Mammary epithelial cell (primary cell): ENCODE measurements at regions of chr7 and their contacts with region 1.

Region 1: DNA sequence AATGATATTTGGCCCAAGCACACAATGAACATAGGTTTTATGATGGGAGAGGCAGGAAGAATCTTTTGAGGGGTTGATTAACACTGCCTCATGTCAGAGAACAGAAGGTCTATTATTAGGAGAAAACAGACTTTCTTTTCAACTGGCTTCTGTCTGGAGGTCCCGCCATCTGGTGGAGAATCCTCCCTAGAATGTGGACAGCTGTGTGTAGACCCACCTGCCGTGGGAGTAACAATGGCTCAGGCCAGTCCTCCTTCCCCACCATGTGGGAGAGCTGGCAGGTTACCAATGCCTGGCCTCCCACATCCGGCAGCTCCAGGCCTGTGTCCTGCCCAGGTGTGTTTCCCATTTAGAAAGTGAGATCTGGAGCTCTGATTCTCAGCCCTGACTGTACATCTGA is 70.4 kb upstream of the AOAH start:
- DNase-seq: peak; percentile 96
- H3K4me3 ChIP-seq: no peak overlapping the region
- H3K27ac ChIP-seq: peak overlapping the region; percentile 92
- H3K4me1 ChIP-seq: peaks cover 27% of the 10 kb centered on the region
- H3K27me3 ChIP-seq: no peaks in the 10 kb centered on the region
- CTCF ChIP-seq: peak; percentile 25 to 30

Region 2: GRCh38 chr7:36583318-36583717 is 211.4 kb before region 1 on chr7:
- CTCF ChIA-PET with region 1: no interaction called
- dilution Hi-C with region 1: no loop called
- in situ Hi-C with region 1: no loop called
- intact Hi-C with region 1: no loop called
- DNase-seq: peak; percentile 62
- H3K4me3 ChIP-seq: no peak overlapping the region
- H3K27ac ChIP-seq: no peak overlapping the region
- H3K4me1 ChIP-seq: peaks cover 10% of the 10 kb centered on the region
- H3K27me3 ChIP-seq: no peaks in the 10 kb centered on the region
- CTCF ChIP-seq: no peak

Region 3: GRCh38 chr7:36746347-36746746 is 48.3 kb before region 1 on chr7:
- CTCF ChIA-PET with region 1: no interaction called
- dilution Hi-C with region 1: loop called (anchors 5 kb)
- in situ Hi-C with region 1: no loop called
- intact Hi-C with region 1: no loop called
- DNase-seq: no peak
- H3K4me3 ChIP-seq: no peak overlapping the region
- H3K27ac ChIP-seq: no peak overlapping the region
- H3K4me1 ChIP-seq: peaks cover 25% of the 10 kb centered on the region
- H3K27me3 ChIP-seq: no peaks in the 10 kb centered on the region
- CTCF ChIP-seq: no peak